ENCODE measurements at regions of chr5 and their contacts with region 1.

Region 1: GRCh38 chr5:160390787-160391696 is 8.8 kb downstream of the FAM200C start:
- DNase-seq: no peak

Region 2: GRCh38 chr5:160359816-160360215 is 31.2 kb before region 1 on chr5:
- CTCF ChIA-PET with region 1: interaction called, 11 read pairs
- POLR2A ChIA-PET with region 1: no interaction called
- DNase-seq: no peak

Measured in HEK293T (cell line).